ENCODE measurements at regions of chr1 and their contacts with region 1.

Region 1: DNA sequence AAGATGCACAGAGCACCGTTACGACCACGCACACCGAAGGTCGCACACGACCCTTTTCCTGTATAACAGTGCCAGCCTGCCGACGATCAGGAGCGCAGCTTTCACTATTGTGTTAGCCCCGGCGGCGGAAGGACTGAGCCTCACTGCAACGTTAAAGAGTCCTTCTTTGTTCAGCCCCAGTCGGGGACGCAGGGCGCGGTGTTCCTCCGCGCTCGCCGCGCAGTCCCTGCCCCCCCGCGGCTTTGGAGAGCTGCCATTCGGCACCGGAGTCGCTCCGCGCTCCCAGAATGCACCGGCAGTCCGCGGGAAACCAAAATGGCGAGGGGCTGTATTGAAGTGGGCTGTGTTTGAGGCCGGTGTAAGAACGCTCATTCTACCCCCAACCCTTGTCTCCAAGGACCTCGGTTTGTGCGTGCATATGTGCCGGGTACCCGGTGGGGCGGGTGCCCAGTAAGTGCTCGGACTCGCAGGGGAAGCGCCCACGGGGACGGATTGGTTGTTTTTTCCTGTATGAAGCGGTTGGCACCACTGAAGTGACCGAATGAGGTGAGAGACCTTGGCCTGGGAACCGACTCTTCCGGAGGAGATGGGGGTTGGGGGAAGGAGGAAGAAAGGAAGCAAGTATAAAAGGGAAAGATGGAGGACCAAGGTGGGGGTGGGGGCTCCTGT is at the start of gene MTF2:
- DNase-seq: peak; percentile 85 to 96 (median 91)
- ATAC-seq: peak; percentile 86
- H3K4me3 ChIP-seq: peak within 1 kb of the TSS; percentile 91 to 92
- H3K4me3 Mint-ChIP-seq: peak within 1 kb of the TSS; percentile 97
- H3K27ac ChIP-seq: peak within 1 kb of the TSS; percentile 76 to 90
- H3K27ac Mint-ChIP-seq: peak within 1 kb of the TSS; percentile 96
- H3K4me1 ChIP-seq: peaks cover 39% of the 10 kb centered on the region
- H3K4me1 Mint-ChIP-seq: peaks cover 50% of the 10 kb centered on the region
- H3K27me3 ChIP-seq: no peaks in the 10 kb centered on the region
- H3K27me3 Mint-ChIP-seq: no peaks in the 10 kb centered on the region
- CTCF ChIP-seq: no peak
- total RNA-seq, gene MTF2: 41.4 to 43.3 TPM

Region 2: GRCh38 chr1:92736395-92736794 is 342.7 kb before region 1 on chr1:
- CTCF ChIA-PET with region 1: no interaction called
- POLR2A ChIA-PET with region 1: no interaction called
- intact Hi-C with region 1: no loop called
- DNase-seq: no peak
- ATAC-seq: no peak
- H3K4me3 ChIP-seq: no peak overlapping the region
- H3K4me3 Mint-ChIP-seq: no peak overlapping the region
- H3K27ac ChIP-seq: no peak overlapping the region
- H3K27ac Mint-ChIP-seq: no peak overlapping the region
- H3K4me1 ChIP-seq: no peaks in the 10 kb centered on the region
- H3K4me1 Mint-ChIP-seq: no peaks in the 10 kb centered on the region
- H3K27me3 ChIP-seq: no peaks in the 10 kb centered on the region
- H3K27me3 Mint-ChIP-seq: peaks cover 2% of the 10 kb centered on the region
- CTCF ChIP-seq: no peak

Region 3: DNA sequence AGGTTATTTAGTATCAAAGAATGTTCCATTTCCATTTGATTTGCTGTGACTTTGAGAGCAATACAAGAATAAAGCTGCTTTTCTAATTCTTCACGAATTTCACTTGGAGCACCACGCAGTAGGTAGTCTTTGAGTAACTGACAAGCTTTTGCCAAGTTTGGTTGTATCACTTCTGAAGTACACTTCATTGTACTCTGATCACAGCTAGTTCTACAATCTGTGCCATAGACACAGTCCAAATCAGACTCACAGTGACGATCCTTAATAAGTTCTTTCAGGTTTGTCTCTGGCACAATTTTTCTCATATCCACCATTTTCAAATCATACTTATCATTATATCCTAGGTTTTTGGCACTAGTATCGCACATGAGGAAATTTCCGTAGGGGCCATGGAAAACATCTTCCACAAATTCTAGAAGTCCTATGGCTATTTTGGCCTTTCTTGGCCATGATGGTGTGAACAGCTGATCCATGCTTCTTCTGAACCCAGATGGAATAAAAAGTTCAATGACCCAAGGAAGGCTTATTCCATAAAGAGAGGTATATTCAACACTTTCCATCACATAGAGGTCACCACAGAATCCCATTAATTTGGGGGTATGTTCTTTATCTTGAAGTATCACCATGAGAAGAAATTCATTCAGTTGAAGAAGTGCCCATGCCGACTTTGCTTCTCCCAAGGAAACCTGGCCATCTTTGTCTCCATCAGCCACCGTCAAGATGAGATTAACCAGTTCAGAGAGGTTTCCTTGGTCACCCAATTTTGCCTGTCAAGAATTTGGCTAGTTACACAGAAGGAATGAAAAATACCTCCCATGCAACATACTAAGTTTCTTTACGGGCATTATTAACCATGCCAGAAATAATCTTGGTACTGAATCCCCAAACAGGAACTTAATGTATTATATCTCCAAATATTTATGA is 235.4 kb before region 1 on chr1:
- CTCF ChIA-PET with region 1: no interaction called
- POLR2A ChIA-PET with region 1: no interaction called
- intact Hi-C with region 1: loop called in 1 of 2 experiments (anchors 5 kb)
- DNase-seq: no peak
- ATAC-seq: no peak
- H3K4me3 ChIP-seq: no peak overlapping the region
- H3K4me3 Mint-ChIP-seq: no peak overlapping the region
- H3K27ac ChIP-seq: no peak overlapping the region
- H3K27ac Mint-ChIP-seq: peak overlapping the region; percentile 22
- H3K4me1 ChIP-seq: peaks cover 12% of the 10 kb centered on the region
- H3K4me1 Mint-ChIP-seq: peaks cover 24% of the 10 kb centered on the region
- H3K27me3 ChIP-seq: no peaks in the 10 kb centered on the region
- H3K27me3 Mint-ChIP-seq: no peaks in the 10 kb centered on the region
- CTCF ChIP-seq: no peak

Region 4: DNA sequence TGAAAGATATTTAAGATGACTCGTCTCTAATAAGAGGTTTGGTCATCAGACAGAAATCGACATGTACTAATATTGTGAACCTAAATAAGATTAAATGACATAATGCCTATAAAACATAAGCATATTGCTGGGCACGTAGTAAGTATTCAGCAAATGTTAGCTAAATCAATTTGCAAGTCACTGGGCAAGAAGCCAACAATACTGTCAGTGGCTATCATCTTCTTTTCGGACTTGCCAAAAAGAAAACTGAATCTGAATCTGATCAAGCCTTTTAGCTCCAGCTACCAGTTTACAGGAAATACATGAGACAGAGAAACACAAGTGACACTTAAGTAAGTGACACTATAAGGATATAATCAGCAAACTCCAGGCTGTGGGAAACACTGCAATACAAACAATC is 201.3 kb before region 1 on chr1:
- CTCF ChIA-PET with region 1: no interaction called
- POLR2A ChIA-PET with region 1: no interaction called
- intact Hi-C with region 1: no loop called
- DNase-seq: peak in 2 of 9 experiments; percentile 40 to 59
- ATAC-seq: peak; percentile 29
- H3K4me3 ChIP-seq: peak overlapping the region in 1 of 2 experiments; percentile 13
- H3K4me3 Mint-ChIP-seq: peak overlapping the region; percentile 33
- H3K27ac ChIP-seq: peak overlapping the region in 1 of 2 experiments; percentile 67
- H3K27ac Mint-ChIP-seq: peak overlapping the region; percentile 88
- H3K4me1 ChIP-seq: peaks cover 20% of the 10 kb centered on the region
- H3K4me1 Mint-ChIP-seq: peaks cover 39% of the 10 kb centered on the region
- H3K27me3 ChIP-seq: no peaks in the 10 kb centered on the region
- H3K27me3 Mint-ChIP-seq: no peaks in the 10 kb centered on the region
- CTCF ChIP-seq: no peak

Region 5: GRCh38 chr1:93021539-93022134 is 57.5 kb before region 1 on chr1:
- CTCF ChIA-PET with region 1: no interaction called
- POLR2A ChIA-PET with region 1: no interaction called
- intact Hi-C with region 1: loop called in 1 of 2 experiments (anchors 5 kb)
- DNase-seq: peak in 3 of 9 experiments; percentile 7 to 72 (median 57)
- ATAC-seq: peak; percentile 79
- H3K4me3 ChIP-seq: no peak overlapping the region
- H3K4me3 Mint-ChIP-seq: no peak overlapping the region
- H3K27ac ChIP-seq: no peak overlapping the region
- H3K27ac Mint-ChIP-seq: no peak overlapping the region
- H3K4me1 ChIP-seq: no peaks in the 10 kb centered on the region
- H3K4me1 Mint-ChIP-seq: peaks cover 3% of the 10 kb centered on the region
- H3K27me3 ChIP-seq: no peaks in the 10 kb centered on the region
- H3K27me3 Mint-ChIP-seq: peaks cover 11% of the 10 kb centered on the region
- CTCF ChIP-seq: peak; percentile 96

Region 6: GRCh38 chr1:93061895-93062792 is 17.0 kb before region 1 on chr1:
- CTCF ChIA-PET with region 1: interaction called, 14 read pairs
- POLR2A ChIA-PET with region 1: interaction called, 7 read pairs
- intact Hi-C with region 1: no loop called
- DNase-seq: peak in 6 of 9 experiments; percentile 25 to 72 (median 37)
- ATAC-seq: peak; percentile 72
- H3K4me3 ChIP-seq: no peak overlapping the region
- H3K4me3 Mint-ChIP-seq: no peak overlapping the region
- H3K27ac ChIP-seq: no peak overlapping the region
- H3K27ac Mint-ChIP-seq: no peak overlapping the region
- H3K4me1 ChIP-seq: no peaks in the 10 kb centered on the region
- H3K4me1 Mint-ChIP-seq: peaks cover 4% of the 10 kb centered on the region
- H3K27me3 ChIP-seq: no peaks in the 10 kb centered on the region
- H3K27me3 Mint-ChIP-seq: peaks cover 12% of the 10 kb centered on the region
- CTCF ChIP-seq: peak; percentile 48

Region 7: GRCh38 chr1:93137604-93138292 is 58.6 kb after region 1 on chr1:
- CTCF ChIA-PET with region 1: no interaction called
- POLR2A ChIA-PET with region 1: no interaction called
- intact Hi-C with region 1: no loop called
- DNase-seq: no peak
- ATAC-seq: no peak
- H3K4me3 ChIP-seq: no peak overlapping the region
- H3K4me3 Mint-ChIP-seq: no peak overlapping the region
- H3K27ac ChIP-seq: no peak overlapping the region
- H3K27ac Mint-ChIP-seq: no peak overlapping the region
- H3K4me1 ChIP-seq: no peaks in the 10 kb centered on the region
- H3K4me1 Mint-ChIP-seq: peaks cover 3% of the 10 kb centered on the region
- H3K27me3 ChIP-seq: no peaks in the 10 kb centered on the region
- H3K27me3 Mint-ChIP-seq: no peaks in the 10 kb centered on the region
- CTCF ChIP-seq: no peak

Region 8: DNA sequence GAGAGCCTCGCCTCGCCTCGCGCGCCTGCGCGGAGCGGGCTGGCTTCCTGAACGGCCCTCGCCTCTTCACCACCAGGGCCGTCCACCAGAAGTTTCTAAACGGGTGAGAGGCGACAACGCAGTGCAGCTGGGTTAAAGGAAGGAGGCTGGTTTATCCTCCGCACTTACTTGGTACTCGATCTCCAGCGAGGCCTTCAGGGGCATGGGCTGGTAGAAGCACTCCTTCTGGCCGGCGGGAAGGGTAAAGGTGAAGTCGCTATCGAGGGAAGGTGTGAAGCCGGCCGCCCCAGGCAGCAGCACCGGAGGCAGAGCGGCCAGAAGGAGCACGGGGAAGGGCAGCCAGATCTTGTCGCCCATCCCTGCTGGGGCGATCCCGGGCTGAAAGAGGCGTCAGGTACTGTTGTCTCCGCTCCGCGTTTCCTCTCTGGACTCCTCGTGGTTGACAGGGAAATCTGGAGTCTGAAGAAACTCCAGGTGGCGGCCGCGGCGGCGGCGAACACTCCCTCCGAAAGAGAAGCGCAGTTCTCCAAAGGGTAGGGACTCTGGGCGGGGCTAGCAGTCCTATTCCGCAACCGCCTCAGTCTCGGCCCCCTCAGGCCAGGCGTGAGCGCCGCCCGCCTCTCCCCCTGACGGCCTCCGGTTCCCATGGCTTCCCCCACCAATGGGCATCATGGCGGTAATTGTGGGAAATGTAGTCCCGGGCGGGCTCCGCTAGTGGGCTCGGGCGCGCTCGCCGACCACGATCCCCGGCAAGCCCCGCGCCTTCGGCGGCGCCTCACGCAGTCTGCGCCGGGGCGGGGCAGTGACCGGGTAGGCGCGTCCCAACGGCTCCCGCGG is 101.0 kb after region 1 on chr1 and contains the start of gene TMED5:
- CTCF ChIA-PET with region 1: interaction called, 3 read pairs
- POLR2A ChIA-PET with region 1: interaction called, 22 read pairs
- intact Hi-C with region 1: loop called (anchors 1 to 2 kb)
- DNase-seq: peak; percentile 90 to 98 (median 95)
- ATAC-seq: peak; percentile 81
- H3K4me3 ChIP-seq: peak within 1 kb of the TSS; percentile 75 to 97
- H3K4me3 Mint-ChIP-seq: peak within 1 kb of the TSS; percentile 91
- H3K27ac ChIP-seq: peak within 1 kb of the TSS; percentile 83 to 98
- H3K27ac Mint-ChIP-seq: peak within 1 kb of the TSS; percentile 97
- H3K4me1 ChIP-seq: peaks cover 33% of the 10 kb centered on the region
- H3K4me1 Mint-ChIP-seq: peaks cover 49% of the 10 kb centered on the region
- H3K27me3 ChIP-seq: no peaks in the 10 kb centered on the region
- H3K27me3 Mint-ChIP-seq: no peaks in the 10 kb centered on the region
- CTCF ChIP-seq: peak; percentile 32
- total RNA-seq, gene TMED5: 38.3 to 38.8 TPM

Region 9: DNA sequence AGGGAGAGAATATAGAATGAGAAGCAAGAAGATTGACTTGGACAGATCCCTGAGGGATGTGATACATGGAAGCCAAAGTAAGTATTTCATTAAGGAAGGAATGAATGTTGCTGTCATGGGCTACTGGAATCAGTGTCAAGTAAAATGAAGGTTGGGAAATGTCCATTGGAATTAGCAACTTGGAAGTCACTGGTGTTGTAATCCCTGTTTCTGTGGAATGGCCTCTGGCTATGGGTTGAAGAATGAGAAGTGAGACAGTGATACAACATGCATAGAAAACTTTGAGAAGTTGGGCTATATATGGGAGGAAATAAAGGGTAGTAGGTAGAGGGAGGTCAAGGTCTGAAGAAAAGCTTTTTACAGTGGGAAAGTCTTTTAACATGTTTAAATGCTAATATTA is 156.2 kb after region 1 on chr1:
- CTCF ChIA-PET with region 1: no interaction called
- POLR2A ChIA-PET with region 1: no interaction called
- intact Hi-C with region 1: no loop called
- DNase-seq: no peak
- ATAC-seq: no peak
- H3K4me3 ChIP-seq: no peak overlapping the region
- H3K4me3 Mint-ChIP-seq: no peak overlapping the region
- H3K27ac ChIP-seq: no peak overlapping the region
- H3K27ac Mint-ChIP-seq: no peak overlapping the region
- H3K4me1 ChIP-seq: no peaks in the 10 kb centered on the region
- H3K4me1 Mint-ChIP-seq: no peaks in the 10 kb centered on the region
- H3K27me3 ChIP-seq: no peaks in the 10 kb centered on the region
- H3K27me3 Mint-ChIP-seq: no peaks in the 10 kb centered on the region
- CTCF ChIP-seq: no peak

Region 10: GRCh38 chr1:93345633-93346420 is 266.7 kb after region 1 on chr1 and contains the start of gene DR1:
- CTCF ChIA-PET with region 1: no interaction called
- POLR2A ChIA-PET with region 1: interaction called, 16 read pairs
- intact Hi-C with region 1: loop called (anchors 2 to 5 kb)
- DNase-seq: peak; percentile 81 to 94 (median 90)
- ATAC-seq: peak; percentile 74
- H3K4me3 ChIP-seq: peak within 1 kb of the TSS; percentile 80 to 81
- H3K4me3 Mint-ChIP-seq: peak within 1 kb of the TSS; percentile 95
- H3K27ac ChIP-seq: peak within 1 kb of the TSS; percentile 72 to 91
- H3K27ac Mint-ChIP-seq: peak within 1 kb of the TSS; percentile 98
- H3K4me1 ChIP-seq: peaks cover 32% of the 10 kb centered on the region
- H3K4me1 Mint-ChIP-seq: peaks cover 51% of the 10 kb centered on the region
- H3K27me3 ChIP-seq: no peaks in the 10 kb centered on the region
- H3K27me3 Mint-ChIP-seq: no peaks in the 10 kb centered on the region
- CTCF ChIP-seq: no peak
- total RNA-seq, gene DR1: 49.1 to 49.9 TPM

Region 11: DNA sequence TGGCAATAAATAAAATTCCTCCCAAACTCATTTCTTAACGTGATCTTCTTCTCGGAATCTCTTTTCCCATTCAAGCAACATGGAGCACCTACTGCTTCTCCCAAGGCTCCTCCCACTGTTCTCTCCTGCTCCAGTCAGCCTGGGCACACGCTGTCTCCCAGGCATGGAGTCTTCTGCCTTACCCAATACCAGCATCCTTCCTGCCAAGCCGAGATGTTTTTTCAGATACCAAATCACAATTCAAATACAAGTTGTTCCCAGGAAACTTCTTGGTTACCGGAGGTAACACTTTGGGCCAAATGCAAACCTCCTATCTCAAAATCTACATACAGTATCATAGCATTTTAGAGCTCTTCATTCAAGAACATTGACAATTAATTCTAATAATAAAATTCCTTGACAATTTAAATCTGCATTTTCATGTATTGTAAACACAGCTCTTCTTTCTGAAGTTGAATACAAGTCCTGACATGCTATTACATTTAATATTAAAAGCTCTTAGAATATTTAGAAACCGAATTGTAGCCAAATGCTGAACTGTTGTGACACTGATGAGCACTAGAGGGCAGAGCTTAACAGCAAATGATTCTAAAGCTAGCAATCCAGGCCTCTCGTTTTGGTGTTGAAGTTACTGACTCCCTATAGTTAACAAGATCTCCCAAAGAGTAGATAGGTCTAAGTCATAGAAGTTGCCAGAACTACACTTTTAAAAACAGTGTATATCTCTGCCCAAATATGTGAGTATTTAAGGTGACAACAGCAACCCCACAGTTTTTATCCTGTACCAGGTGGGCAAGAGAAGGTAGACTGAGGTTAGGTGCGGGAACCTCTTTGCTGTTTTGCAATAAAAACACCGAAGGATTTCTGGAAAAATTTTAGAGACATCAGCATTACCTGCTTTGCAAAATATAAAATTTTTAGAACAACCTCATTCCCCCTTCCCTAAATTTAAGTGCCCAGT is 550.3 kb after region 1 on chr1:
- CTCF ChIA-PET with region 1: interaction called, 3 read pairs
- POLR2A ChIA-PET with region 1: no interaction called
- intact Hi-C with region 1: loop called in 1 of 2 experiments (anchors 5 kb)
- DNase-seq: peak; percentile 8 to 78 (median 37)
- ATAC-seq: peak; percentile 93
- H3K4me3 ChIP-seq: no peak overlapping the region
- H3K4me3 Mint-ChIP-seq: no peak overlapping the region
- H3K27ac ChIP-seq: no peak overlapping the region
- H3K27ac Mint-ChIP-seq: no peak overlapping the region
- H3K4me1 ChIP-seq: no peaks in the 10 kb centered on the region
- H3K4me1 Mint-ChIP-seq: no peaks in the 10 kb centered on the region
- H3K27me3 ChIP-seq: no peaks in the 10 kb centered on the region
- H3K27me3 Mint-ChIP-seq: no peaks in the 10 kb centered on the region
- CTCF ChIP-seq: peak; percentile 90